Activated T-helper 1 cell treated with anti-CD3 and anti-CD28 coated beads, Interleukin-12 subunit alpha, Interleukin-12 subunit beta, Interleukin-2, Interleukin-4 antibody, amounts not matched to agents 30 ng/mL and 10 ng/mL and 1 ng/mL, durations not matched to agents 14 hours and 24 hours and 36 hours (primary cell): ENCODE measurements at regions of chr3 and their contacts with region 1.

Region 1: GRCh38 chr3:25554376-25554775 is 110.3 kb downstream of the TOP2B start:
- DNase-seq: no peak
- H3K4me3 Mint-ChIP-seq: no peak overlapping the region
- H3K27ac Mint-ChIP-seq: no peak overlapping the region
- H3K4me1 Mint-ChIP-seq: no peaks in the 10 kb centered on the region
- H3K27me3 Mint-ChIP-seq: peaks cover 3% of the 10 kb centered on the region

Region 2: DNA sequence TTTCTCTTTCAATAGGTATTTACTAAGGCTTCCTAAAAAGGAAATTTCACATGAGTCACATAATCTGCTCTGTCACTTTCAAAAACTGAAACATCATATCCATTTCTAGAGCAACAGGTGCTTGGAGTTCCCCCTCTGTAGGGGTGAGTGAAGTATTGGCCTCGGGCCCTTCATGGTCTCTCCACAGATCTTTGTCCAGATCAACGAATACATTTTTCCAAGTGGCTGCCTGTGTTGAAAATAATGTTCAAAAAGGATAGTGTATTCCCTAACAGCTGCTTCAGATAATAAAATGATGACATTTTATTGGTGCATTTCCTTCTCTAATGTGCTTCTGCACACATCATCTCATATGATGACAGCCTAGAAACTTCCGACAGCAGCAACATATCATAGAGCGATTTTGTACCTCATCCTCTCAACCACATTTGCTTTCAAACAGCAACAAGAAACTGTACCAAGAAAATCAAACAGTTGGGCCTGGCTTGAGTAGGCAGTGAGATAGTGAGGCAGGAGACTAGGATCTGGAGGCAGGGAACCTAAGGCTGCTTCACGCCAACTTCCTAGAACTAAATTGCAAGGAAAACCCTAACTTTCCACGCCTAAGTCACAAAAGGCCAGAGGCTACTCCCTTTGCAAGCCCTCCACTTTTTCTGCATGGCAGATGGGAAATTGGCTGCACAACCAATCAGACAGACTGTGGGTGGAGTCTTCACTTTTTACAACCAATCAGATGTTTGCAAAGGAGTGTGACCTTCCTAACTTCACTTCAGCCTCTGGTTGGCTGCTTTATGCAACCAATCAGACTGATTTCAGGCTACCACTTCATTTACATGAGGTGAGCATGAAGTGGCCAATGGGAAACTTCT is 1408.3 kb after region 1 on chr3:
- intact Hi-C with region 1: loop called (anchors 5 kb)
- DNase-seq: no peak
- H3K4me3 Mint-ChIP-seq: no peak overlapping the region
- H3K27ac Mint-ChIP-seq: no peak overlapping the region
- H3K4me1 Mint-ChIP-seq: no peaks in the 10 kb centered on the region
- H3K27me3 Mint-ChIP-seq: no peaks in the 10 kb centered on the region